GM18951 (cell line): ENCODE measurements at regions of chr15 and their contacts with region 1.

Region 1: GRCh38 chr15:38699633-38700230 is 135.1 kb upstream of the RASGRP1 start:
- POLR2A ChIP-seq: no peak

Region 2: GRCh38 chr15:38474155-38474757 is 225.5 kb before region 1 on chr15:
- in situ Hi-C with region 1: loop called (anchors 10 kb)
- POLR2A ChIP-seq: no peak

Region 3: DNA sequence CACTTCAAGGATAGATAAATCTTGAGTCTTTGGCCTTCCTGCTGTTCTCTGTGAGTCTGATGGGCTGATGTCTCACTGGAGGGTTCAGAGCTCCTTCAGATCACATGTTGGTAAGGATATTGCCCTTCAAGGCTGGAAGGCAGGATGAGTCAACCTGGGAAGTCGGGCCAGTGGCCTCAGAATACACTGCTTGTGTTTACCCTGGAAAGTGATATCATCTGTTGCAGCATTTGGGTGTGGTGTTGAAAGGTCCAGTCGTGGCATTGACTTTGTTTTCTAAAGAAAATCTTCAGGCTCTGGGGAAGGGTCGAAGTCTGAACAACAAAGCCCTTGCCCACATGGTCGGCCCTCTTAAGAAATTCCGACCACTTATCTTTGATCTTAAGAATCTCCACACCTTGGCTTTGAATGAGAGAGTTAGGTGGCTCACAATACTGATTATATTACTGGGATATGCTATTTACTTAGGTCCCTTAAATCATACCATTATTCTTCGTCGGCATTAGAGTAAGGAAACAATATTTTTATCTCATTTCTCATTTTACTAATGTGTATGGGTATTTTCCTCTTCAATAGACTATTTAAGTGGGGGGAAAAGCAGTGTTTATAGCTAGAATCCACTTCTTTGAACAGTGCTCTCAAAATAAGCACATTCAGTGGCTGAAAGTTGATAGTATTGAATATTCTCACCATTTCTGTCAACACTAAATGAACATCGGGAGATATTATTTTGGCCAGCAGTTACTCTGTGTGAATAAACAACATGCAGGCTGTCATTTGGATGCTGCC is 168.8 kb after region 1 on chr15:
- in situ Hi-C with region 1: no loop called
- POLR2A ChIP-seq: no peak